PC-9 (cell line): ENCODE measurements at regions of chr20 and their contacts with region 1.

Region 1: DNA sequence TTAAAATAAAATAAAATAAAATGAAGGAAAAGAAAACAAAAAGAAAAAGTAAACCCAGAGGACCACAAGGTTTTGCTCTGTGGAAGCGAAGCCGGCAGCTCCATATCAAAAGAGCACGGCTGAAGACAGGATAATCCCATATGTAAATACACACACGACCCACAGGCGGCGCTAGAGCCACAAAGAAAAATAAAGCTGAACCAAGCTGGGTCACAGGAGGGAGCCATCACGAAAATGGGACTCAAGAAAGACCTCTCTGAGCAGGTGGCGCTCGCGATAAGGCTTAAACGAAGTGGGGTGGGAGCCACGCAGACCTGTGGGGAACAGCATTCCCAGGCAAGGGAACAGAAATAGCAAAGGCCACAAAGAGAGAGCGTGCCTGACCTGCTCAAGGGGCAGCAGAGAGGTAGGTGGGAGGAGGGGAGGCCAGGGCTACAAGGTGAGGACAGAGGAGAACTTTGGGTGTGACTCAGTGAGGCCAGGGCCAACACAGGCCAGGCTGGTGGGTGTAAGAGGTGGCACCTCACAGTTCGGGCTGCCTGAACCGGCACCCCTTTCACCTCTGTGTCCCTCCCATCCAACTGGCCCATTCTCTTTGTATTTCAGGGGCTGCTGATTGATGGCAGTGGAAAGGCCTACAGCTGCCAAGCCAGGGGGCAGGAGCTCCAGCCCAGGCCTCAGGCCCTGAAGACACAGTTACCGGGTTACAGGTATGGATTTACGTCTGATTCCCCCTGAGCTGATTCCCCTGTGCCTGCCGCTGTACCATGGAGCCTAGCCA is 26.0 kb downstream of the PTGIS start:
- DNase-seq: peak; percentile 74 to 81
- H3K4me3 ChIP-seq: no peak overlapping the region
- H3K27ac ChIP-seq: peak overlapping the region; percentile 41
- H3K4me1 ChIP-seq: peaks cover 23% of the 10 kb centered on the region
- H3K27me3 ChIP-seq: no peaks in the 10 kb centered on the region
- CTCF ChIP-seq: peak; percentile 100

Region 2: DNA sequence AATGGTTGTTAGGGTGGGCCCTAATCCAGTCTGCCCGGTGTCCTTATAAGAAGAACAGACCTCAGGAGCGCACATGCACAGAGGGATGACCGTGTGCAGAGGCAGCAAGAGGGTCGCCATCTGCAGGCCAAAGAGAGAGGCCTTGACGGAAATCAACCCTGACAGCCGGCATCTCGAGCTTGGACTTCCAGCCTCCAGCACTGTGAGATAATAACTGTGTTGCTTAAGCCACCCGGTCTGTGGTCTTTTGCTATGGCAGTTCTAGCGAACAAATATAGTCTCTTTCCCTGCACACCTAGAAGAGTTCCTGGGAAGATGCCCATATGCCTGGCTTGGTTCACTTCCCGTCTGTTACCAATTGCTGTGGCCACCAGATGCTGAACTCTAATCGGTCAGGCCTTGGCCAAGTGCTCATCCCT is 61.3 kb after region 1 on chr20:
- CTCF ChIA-PET with region 1: interaction called, 75 read pairs
- POLR2A ChIA-PET with region 1: interaction called, 3 read pairs
- intact Hi-C with region 1: loop called (anchors 1 kb)
- DNase-seq: peak in 1 of 2 experiments; percentile 62
- H3K4me3 ChIP-seq: no peak overlapping the region
- H3K27ac ChIP-seq: peak overlapping the region; percentile 65; the same call in 1 of the 2 replicates
- H3K4me1 ChIP-seq: peaks cover 53% of the 10 kb centered on the region
- H3K27me3 ChIP-seq: no peaks in the 10 kb centered on the region
- CTCF ChIP-seq: peak; percentile 43; the same call in 1 of the 2 replicates

Region 3: DNA sequence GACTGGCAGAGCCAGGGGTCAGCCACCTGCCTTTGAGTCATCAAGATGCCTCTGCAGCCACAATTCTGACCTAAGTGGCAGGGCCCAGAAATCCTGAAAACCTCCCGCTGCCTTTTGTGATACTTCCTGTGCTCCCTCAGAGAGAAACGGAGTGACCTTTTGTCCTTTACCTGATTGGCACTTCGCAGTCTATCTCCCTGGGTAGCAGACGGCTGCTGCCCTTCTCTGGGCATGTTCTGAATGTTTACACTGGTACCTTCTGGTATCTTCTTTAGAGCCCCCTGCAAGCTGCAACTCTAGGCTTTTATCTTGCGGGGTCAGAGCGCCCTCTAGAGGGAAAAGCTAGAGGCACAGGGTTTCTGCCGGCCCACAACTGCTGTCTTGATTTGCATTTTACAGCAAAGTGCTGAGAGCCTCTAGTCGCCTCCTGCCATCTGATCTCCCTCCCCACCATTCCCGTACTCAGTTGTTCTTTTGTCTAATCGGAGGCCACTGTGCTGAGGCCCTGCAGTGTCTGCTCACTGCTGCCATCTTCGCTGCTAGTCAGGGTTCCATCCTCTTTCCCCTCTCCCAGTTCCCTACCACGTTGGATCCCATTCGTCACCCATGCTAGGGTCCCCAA is 346.5 kb after region 1 on chr20:
- CTCF ChIA-PET with region 1: no interaction called
- POLR2A ChIA-PET with region 1: no interaction called
- intact Hi-C with region 1: loop called (anchors 1 kb)
- DNase-seq: peak; percentile 79 to 89
- H3K4me3 ChIP-seq: no peak overlapping the region
- H3K27ac ChIP-seq: peak overlapping the region; percentile 49
- H3K4me1 ChIP-seq: peaks cover 44% of the 10 kb centered on the region
- H3K27me3 ChIP-seq: no peaks in the 10 kb centered on the region
- CTCF ChIP-seq: peak; percentile 99